ENCODE measurements at regions of chr17 and their contacts with region 1.

Region 1: DNA sequence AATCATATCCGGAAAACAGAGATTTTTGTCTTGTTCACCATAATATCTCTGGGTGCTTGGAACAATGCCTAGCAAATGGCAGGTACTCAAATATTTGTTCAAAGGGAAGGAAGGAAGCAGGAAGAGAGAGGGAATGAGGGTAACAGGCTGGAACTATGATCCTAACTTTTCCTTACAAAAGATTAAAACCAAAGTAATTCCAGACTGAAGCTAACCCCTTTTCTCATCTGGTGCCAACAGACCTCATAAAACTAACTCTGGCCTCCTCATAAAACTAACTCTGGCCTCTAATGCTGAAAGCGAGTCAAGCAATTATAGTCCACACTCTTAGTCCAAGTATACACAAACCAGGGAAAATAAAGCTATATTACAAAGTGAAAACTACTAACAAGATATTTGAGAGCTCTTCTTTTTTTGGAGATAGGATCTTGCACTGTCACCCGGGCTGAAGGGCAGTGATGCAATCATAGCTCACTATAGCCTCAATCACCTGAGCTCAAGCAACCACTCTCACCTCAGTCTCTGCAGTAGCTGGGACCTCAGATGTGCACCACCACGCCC is 84.6 kb downstream of the KANSL1 start:
- DNase-seq: no peak
- ATAC-seq: peak; percentile 28 to 42
- H3K4me3 Mint-ChIP-seq: peak overlapping the region in 5 of 10 donors; percentile 4 to 23 (median 7)
- H3K27ac Mint-ChIP-seq: peak overlapping the region in 9 of 10 donors; percentile 0 to 68 (median 31)
- H3K4me1 Mint-ChIP-seq: peaks cover 43 to 96% (median 86%) of the 10 kb centered on the region in 4 donors
- H3K27me3 Mint-ChIP-seq: no peaks in the 10 kb centered on the region

Region 2: DNA sequence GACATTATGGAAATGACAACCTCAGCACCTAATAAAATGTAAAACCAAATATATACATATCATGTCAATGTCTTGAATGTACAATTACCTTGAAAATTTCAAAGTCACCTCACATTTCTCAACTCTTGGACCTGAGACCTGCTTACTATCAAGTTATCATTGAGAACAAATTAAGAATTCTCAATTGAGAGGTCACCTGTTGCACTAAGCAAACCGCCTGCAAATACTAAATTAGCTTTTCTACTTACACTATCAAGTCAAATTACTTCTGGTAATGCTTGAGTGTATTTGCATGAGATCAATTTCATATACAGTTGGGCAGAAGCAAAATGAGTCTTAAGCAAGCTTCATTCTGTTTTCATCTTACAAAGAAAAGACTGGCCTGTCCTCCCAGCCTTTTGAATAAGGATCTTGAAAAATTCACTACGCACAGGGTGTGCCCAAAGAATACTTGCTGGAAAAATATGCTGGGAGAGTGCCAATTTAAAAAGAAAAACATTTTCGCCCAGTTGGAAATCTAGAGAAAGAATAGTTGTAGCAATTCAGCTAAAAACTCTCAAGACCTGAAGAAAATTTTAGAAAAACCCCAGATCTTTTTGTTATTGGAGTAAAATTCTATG is 48.9 kb after region 1 on chr17:
- POLR2A ChIA-PET with region 1: interaction called, 10 read pairs
- DNase-seq: no peak
- ATAC-seq: no peak
- H3K4me3 Mint-ChIP-seq: peak overlapping the region in 7 of 10 donors; percentile 10 to 54 (median 34)
- H3K27ac Mint-ChIP-seq: peak overlapping the region in 7 of 10 donors; percentile 28 to 77 (median 47)
- H3K4me1 Mint-ChIP-seq: peaks cover 52 to 96% (median 86%) of the 10 kb centered on the region in 4 donors
- H3K27me3 Mint-ChIP-seq: no peaks in the 10 kb centered on the region